MCF 10A (cell line): ENCODE measurements at regions of chr20 and their contacts with region 1.

Region 1: DNA sequence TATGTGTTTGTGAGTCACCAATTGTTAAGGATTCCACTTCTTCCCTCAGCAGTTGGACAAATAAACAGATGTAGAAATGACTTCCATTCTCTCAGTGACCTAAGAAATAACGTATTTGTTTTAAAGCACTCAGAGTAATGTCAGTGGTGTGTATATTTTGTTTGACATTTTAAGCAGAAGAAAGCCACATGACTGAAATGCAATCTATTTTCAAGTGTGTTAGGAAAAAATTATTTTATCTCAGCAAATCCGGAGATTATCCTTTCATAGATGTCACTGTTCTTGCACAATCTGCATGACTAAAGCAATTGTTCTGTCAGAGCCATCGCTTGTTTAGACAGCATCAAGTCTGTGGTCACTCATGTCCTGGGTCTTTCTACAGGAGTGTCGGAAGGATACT is 77.1 kb downstream of the JAG1 start:
- DNase-seq: peak; percentile 88
- H3K4me3 Mint-ChIP-seq: peak overlapping the region; percentile 2
- H3K27ac Mint-ChIP-seq: peak overlapping the region; percentile 5
- H3K4me1 Mint-ChIP-seq: peaks cover 33% of the 10 kb centered on the region
- H3K27me3 Mint-ChIP-seq: no peaks in the 10 kb centered on the region
- CTCF ChIP-seq: no peak

Region 2: DNA sequence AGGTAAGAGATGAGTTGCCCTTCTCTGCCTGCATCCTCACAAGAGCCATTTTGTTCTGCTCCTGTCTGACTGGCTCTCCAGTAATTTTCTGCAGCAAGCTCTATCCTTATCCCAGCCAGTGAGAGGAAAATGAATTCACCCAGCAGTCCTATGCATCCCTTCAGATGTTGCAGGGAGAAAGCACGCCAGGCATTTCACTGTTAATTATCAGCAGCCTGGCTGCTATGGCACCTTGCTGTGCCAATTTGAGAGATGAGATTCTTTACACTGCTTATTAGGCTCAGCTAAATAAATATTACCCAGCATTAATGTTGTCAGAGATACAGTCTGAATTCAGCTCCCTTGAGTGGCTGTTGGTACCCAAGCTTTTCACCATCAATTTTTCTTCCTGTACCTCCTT is 439.2 kb before region 1 on chr20:
- CTCF ChIA-PET with region 1: no interaction called
- POLR2A ChIA-PET with region 1: no interaction called
- intact Hi-C with region 1: no loop called
- DNase-seq: no peak
- H3K4me3 Mint-ChIP-seq: no peak overlapping the region
- H3K27ac Mint-ChIP-seq: no peak overlapping the region
- H3K4me1 Mint-ChIP-seq: no peaks in the 10 kb centered on the region
- H3K27me3 Mint-ChIP-seq: peaks cover 61% of the 10 kb centered on the region
- CTCF ChIP-seq: no peak

Region 3: GRCh38 chr20:10578607-10579006 is 18.1 kb before region 1 on chr20:
- CTCF ChIA-PET with region 1: interaction called, 7 read pairs
- POLR2A ChIA-PET with region 1: interaction called, 39 read pairs
- intact Hi-C with region 1: no loop called
- DNase-seq: peak; percentile 54
- H3K4me3 Mint-ChIP-seq: no peak overlapping the region
- H3K27ac Mint-ChIP-seq: peak overlapping the region; percentile 71
- H3K4me1 Mint-ChIP-seq: peaks cover 32% of the 10 kb centered on the region
- H3K27me3 Mint-ChIP-seq: no peaks in the 10 kb centered on the region
- CTCF ChIP-seq: no peak

Region 4: GRCh38 chr20:10619427-10619826 is 22.7 kb after region 1 on chr20:
- CTCF ChIA-PET with region 1: interaction called, 4 read pairs
- POLR2A ChIA-PET with region 1: interaction called, 38 read pairs
- intact Hi-C with region 1: loop called (anchors 1 kb)
- DNase-seq: peak; percentile 92
- H3K4me3 Mint-ChIP-seq: peak overlapping the region; percentile 13
- H3K27ac Mint-ChIP-seq: peak overlapping the region; percentile 90
- H3K4me1 Mint-ChIP-seq: peaks cover 18% of the 10 kb centered on the region
- H3K27me3 Mint-ChIP-seq: no peaks in the 10 kb centered on the region
- CTCF ChIP-seq: no peak

Region 5: DNA sequence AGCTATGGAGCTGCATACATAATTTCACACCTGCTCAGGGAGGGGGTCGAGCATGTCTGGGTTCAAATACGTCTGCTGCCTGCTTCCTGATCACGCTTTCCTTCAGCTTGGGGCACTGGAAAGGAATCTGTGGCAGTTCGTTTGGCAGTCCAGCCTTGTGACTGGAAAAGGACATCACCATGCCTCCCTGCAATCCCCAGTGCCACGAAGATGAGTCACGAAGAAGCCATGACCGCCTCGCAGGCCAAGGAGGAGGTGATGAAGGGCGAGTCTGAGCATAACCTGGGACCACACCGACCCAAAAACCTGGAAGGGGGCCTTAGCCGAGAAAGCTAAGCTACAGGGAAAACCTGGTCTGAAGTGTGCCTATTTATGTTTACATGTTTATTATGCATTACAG is 63.9 kb after region 1 on chr20:
- CTCF ChIA-PET with region 1: interaction called, 5 read pairs
- POLR2A ChIA-PET with region 1: interaction called, 170 read pairs
- intact Hi-C with region 1: no loop called
- DNase-seq: peak; percentile 70
- H3K4me3 Mint-ChIP-seq: peak overlapping the region; percentile 3
- H3K27ac Mint-ChIP-seq: peak overlapping the region; percentile 56
- H3K4me1 Mint-ChIP-seq: peaks cover 30% of the 10 kb centered on the region
- H3K27me3 Mint-ChIP-seq: no peaks in the 10 kb centered on the region
- CTCF ChIP-seq: no peak